Activated CD8-positive, alpha-beta T cell treated with anti-CD3 and anti-CD28 coated beads, Interleukin-2, amount 10 ng/mL, durations not matched to agents 7 days and 5 days (primary cell): ENCODE measurements at regions of chr14 and their contacts with region 1.

Region 1: GRCh38 chr14:24160850-24161804 is at the start of gene IRF9:
- DNase-seq: peak; percentile 99
- ATAC-seq: peak; percentile 86
- H3K4me3 Mint-ChIP-seq: peak within 1 kb of the TSS; percentile 92
- H3K27ac Mint-ChIP-seq: peak within 1 kb of the TSS; percentile 100
- H3K4me1 Mint-ChIP-seq: peaks cover 58% of the 10 kb centered on the region
- H3K27me3 Mint-ChIP-seq: no peaks in the 10 kb centered on the region
- total RNA-seq, gene IRF9: 221 to 242 TPM

Region 2: DNA sequence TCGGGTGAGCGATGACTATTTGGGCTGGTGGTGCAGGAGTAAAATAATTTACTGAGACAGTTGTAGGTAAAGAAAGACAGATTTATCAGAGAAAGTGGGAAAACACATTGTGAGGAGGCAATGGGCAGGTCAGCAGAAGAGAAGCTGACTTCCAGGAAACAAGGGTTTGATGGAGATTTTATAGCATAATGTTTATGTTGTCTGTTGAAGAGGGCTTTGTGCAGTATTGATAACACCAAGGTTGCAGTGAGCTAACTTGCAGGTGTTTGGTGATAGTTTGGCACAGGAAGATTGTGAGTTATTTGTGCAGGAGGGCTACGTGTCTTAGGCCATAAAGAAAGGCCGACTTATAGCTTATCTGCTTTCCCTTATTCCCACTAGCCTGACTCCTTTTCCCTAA is 452.8 kb before region 1 on chr14:
- CTCF ChIA-PET with region 1: no interaction called
- POLR2A ChIA-PET with region 1: no interaction called
- DNase-seq: no peak
- ATAC-seq: no peak
- H3K4me3 Mint-ChIP-seq: no peak overlapping the region
- H3K27ac Mint-ChIP-seq: no peak overlapping the region
- H3K4me1 Mint-ChIP-seq: no peaks in the 10 kb centered on the region
- H3K27me3 Mint-ChIP-seq: peaks cover 11% of the 10 kb centered on the region

Region 3: GRCh38 chr14:24036169-24036962 is 124.8 kb before region 1 on chr14:
- CTCF ChIA-PET with region 1: no interaction called
- POLR2A ChIA-PET with region 1: no interaction called
- DNase-seq: peak; percentile 78
- ATAC-seq: peak; percentile 86
- H3K4me3 Mint-ChIP-seq: peak overlapping the region; percentile 82
- H3K27ac Mint-ChIP-seq: peak overlapping the region; percentile 84
- H3K4me1 Mint-ChIP-seq: peaks cover 20% of the 10 kb centered on the region
- H3K27me3 Mint-ChIP-seq: peaks cover 3% of the 10 kb centered on the region

Region 4: GRCh38 chr14:24058260-24058950 is 102.7 kb before region 1 on chr14:
- CTCF ChIA-PET with region 1: interaction called, 50 read pairs
- POLR2A ChIA-PET with region 1: interaction called, 19 read pairs
- DNase-seq: peak; percentile 81
- ATAC-seq: peak; percentile 75
- H3K4me3 Mint-ChIP-seq: no peak overlapping the region
- H3K27ac Mint-ChIP-seq: peak overlapping the region; percentile 72
- H3K4me1 Mint-ChIP-seq: peaks cover 10% of the 10 kb centered on the region
- H3K27me3 Mint-ChIP-seq: peaks cover 5% of the 10 kb centered on the region

Region 5: DNA sequence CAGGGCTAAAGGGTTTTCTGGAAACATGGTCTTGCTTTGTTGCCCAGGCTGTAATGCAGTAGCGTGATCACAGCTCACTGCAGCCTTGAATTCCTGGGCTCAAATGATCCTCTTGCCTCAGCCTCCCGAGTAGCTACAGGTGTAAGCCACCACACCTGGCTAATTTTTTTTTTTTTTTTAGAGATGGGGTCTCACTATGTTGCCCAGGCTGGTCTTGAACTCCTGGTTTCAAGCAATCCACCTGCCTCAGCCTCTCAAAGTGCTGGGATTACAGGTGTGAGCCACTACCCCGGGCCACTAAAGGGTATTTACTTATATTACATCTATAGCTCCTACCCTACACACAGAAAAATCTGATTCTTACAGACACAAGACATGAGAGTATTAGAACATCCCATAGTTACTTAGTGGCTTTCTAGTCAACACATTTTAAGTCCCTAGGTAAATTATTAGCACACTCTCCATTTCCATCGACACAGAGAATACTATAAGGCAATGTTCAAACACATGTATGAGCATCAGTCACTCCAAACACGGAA is 52.7 kb before region 1 on chr14:
- CTCF ChIA-PET with region 1: interaction called, 66 read pairs
- POLR2A ChIA-PET with region 1: interaction called, 85 read pairs
- DNase-seq: no peak
- ATAC-seq: no peak
- H3K4me3 Mint-ChIP-seq: no peak overlapping the region
- H3K27ac Mint-ChIP-seq: peak overlapping the region; percentile 97
- H3K4me1 Mint-ChIP-seq: peaks cover 42% of the 10 kb centered on the region
- H3K27me3 Mint-ChIP-seq: no peaks in the 10 kb centered on the region

Region 6: DNA sequence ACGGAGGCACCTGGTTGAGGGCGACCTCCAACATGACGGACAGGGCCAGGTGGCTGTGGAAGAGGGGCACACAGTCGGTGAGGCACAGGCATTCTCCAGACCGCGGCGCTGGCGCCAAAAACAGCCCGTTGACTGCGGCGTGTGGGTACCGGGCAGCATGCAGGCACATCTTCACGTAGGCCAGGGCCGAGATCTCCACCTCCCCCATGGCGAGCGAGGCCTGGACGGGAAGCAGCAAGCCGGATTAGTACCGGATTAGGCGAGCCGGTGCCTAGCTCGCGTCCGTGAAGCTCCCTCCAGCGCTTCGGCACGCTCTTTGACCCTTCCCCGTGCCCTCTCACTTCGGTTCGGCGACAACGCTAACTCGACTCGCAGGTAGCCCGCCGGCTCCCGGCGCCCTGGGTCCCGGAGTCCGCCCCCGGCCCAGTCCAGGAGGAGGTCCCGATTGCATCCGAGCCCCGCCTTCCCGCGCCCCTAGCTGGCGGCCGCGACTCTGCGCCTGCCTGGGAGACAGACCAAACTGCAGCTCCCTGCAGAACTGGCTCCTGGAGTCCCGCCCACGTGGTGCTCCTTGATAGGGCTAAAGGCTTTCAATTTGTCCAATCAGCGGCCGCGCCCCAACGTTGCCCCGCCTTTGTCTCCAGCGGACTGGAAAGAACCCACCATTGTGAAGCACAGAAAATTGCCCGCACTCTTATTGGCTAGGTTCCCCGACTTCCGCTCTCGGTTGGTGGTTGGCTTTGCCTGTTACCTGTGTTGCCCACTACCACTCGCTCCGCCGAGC is 19.8 kb before region 1 on chr14 and contains the start of gene EMC9:
- CTCF ChIA-PET with region 1: interaction called, 77 read pairs
- POLR2A ChIA-PET with region 1: interaction called, 229 read pairs
- DNase-seq: peak; percentile 100
- ATAC-seq: peak; percentile 92
- H3K4me3 Mint-ChIP-seq: peak within 1 kb of the TSS; percentile 97
- H3K27ac Mint-ChIP-seq: peak within 1 kb of the TSS; percentile 77
- H3K4me1 Mint-ChIP-seq: peaks cover 66% of the 10 kb centered on the region
- H3K27me3 Mint-ChIP-seq: no peaks in the 10 kb centered on the region
- total RNA-seq, gene EMC9: 49.9 to 53.2 TPM

Region 7: GRCh38 chr14:24179961-24180796 is 19.1 kb after region 1 on chr14:
- CTCF ChIA-PET with region 1: interaction called, 9 read pairs
- POLR2A ChIA-PET with region 1: interaction called, 85 read pairs
- DNase-seq: no peak
- ATAC-seq: no peak
- H3K4me3 Mint-ChIP-seq: no peak overlapping the region
- H3K27ac Mint-ChIP-seq: no peak overlapping the region
- H3K4me1 Mint-ChIP-seq: peaks cover under 1% of the 10 kb centered on the region
- H3K27me3 Mint-ChIP-seq: no peaks in the 10 kb centered on the region

Region 8: DNA sequence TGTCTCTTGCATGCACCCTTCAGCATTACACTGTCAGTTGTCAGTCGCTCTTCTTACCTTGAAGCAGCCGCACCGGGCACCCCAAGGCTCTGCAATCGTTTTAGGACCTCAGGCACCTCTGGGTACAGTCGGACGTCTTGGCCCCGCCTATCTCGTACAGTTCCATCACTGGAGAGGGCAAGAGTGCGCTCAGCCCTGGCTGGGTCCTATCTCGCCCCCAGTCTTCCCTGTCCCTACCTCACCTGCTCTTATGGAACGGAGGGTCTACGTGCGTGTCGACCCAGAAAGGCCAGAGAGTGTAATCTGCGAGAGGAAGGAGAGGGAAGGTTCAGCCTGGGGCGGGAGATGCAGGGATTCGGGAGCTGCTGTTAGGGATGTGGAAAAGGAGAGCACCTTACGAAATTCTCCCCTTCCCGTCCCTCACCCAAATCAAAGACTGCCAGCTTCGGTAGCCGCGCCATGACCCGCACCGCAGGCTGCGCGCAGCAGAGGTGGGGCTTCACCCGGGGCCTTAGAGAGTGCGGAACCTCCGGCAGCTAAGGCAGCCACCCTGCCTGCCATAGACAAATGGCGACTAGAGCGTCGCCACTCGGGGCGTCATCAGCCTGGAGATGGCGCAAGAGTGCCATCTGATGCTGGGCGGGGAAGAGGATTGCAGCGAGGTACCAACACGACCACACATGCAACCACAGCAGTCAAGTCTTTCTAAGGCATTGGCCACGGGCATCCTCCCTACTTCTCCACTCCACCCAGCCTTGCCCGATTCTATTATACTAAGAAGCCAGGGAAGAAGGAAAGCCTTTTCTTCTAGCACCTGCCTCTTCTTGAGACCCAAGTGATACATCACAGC is 54.6 kb after region 1 on chr14 and contains the start of gene MDP1:
- CTCF ChIA-PET with region 1: interaction called, 11 read pairs
- POLR2A ChIA-PET with region 1: interaction called, 43 read pairs
- DNase-seq: peak; percentile 93
- ATAC-seq: peak; percentile 77
- H3K4me3 Mint-ChIP-seq: peak within 1 kb of the TSS; percentile 94
- H3K27ac Mint-ChIP-seq: peak within 1 kb of the TSS; percentile 97
- H3K4me1 Mint-ChIP-seq: peaks cover 46% of the 10 kb centered on the region
- H3K27me3 Mint-ChIP-seq: no peaks in the 10 kb centered on the region
- total RNA-seq, gene MDP1: 16.9 to 18.2 TPM

Region 9: GRCh38 chr14:24372701-24373416 is 211.7 kb after region 1 on chr14:
- CTCF ChIA-PET with region 1: no interaction called
- POLR2A ChIA-PET with region 1: no interaction called
- DNase-seq: no peak
- ATAC-seq: no peak
- H3K4me3 Mint-ChIP-seq: no peak overlapping the region
- H3K27ac Mint-ChIP-seq: no peak overlapping the region
- H3K4me1 Mint-ChIP-seq: peaks cover 14% of the 10 kb centered on the region
- H3K27me3 Mint-ChIP-seq: peaks cover 21% of the 10 kb centered on the region